IMR-90 (cell line): ENCODE measurements at regions of chr17 and their contacts with region 1.

Region 1: DNA sequence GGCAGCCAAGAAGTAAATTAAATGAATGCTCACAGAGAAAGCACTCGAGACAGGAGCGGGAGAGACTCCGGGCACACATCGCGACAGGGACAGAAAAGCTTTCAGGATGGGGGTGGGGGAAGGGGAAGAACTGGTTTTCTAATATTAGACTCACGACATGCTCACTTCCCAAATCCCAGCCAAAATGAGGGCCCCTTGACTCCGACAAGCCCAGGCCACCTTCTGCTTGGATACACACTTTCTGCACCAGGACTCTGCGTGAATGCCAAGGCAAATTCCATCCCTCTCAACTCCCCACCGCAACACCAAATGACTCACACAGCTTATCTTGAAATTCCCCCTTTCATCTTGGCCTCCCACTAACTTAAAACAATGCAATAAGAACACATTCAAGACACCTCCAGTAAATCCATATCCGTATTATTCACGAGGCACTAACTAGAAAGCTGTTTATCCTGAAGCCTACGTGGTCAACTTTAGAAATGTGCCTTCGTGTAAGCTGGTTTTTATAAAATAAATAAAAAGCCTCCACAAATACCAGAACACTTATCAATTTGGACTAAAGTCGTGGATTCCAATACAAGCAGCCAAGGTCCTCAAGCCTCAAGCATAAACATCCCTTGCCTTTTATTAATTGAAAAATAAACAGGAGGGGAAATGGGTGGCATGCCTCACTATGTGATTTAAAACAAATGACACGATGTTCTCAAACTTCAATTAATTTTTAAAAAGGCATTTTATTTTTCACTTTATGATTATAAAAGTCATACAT is 46.1 kb downstream of the NXN start:
- DNase-seq: peak; percentile 99
- ATAC-seq: peak; percentile 86
- H3K4me3 ChIP-seq: no peak overlapping the region
- H3K27ac ChIP-seq: peak overlapping the region; percentile 86
- H3K4me1 ChIP-seq: peaks cover 19% of the 10 kb centered on the region
- H3K27me3 ChIP-seq: 0 out of 2 replicates have a peak, but pooled peaks cover 4% of the 10 kb centered on the region
- CTCF ChIP-seq: no peak
- POLR2A ChIP-seq: no peak
- RAD21 ChIP-seq: no peak

Region 2: GRCh38 chr17:915538-916201 is 17.8 kb before region 1 on chr17:
- CTCF ChIA-PET with region 1: no interaction called
- POLR2A ChIA-PET with region 1: no interaction called
- dilution Hi-C with region 1: no loop called
- in situ Hi-C with region 1: no loop called
- intact Hi-C with region 1: no loop called
- DNase-seq: no peak
- ATAC-seq: no peak
- H3K4me3 ChIP-seq: no peak overlapping the region
- H3K27ac ChIP-seq: peak overlapping the region; percentile 50; the same call in 1 of the 2 replicates
- H3K4me1 ChIP-seq: peaks cover 2% of the 10 kb centered on the region; the same call in 1 of the 2 replicates
- H3K27me3 ChIP-seq: no peaks in the 10 kb centered on the region
- CTCF ChIP-seq: no peak
- POLR2A ChIP-seq: no peak
- RAD21 ChIP-seq: no peak

Region 3: GRCh38 chr17:954431-955164 is 21.1 kb after region 1 on chr17:
- CTCF ChIA-PET with region 1: interaction called, 3 read pairs
- POLR2A ChIA-PET with region 1: no interaction called
- dilution Hi-C with region 1: no loop called
- in situ Hi-C with region 1: no loop called
- intact Hi-C with region 1: loop called (anchors 1 kb)
- DNase-seq: peak; percentile 95
- ATAC-seq: peak; percentile 33
- H3K4me3 ChIP-seq: no peak overlapping the region
- H3K27ac ChIP-seq: peak overlapping the region; percentile 68
- H3K4me1 ChIP-seq: peaks cover 31% of the 10 kb centered on the region
- H3K27me3 ChIP-seq: no peaks in the 10 kb centered on the region
- CTCF ChIP-seq: no peak
- POLR2A ChIP-seq: no peak
- RAD21 ChIP-seq: no peak